AG04449 (cell line): ENCODE measurements at regions of chr17 and their contacts with region 1.

Region 1: GRCh38 chr17:18248300-18248731 is 10.2 kb downstream of the FLII start:
- DNase-seq: no peak
- H3K4me3 ChIP-seq: no peak overlapping the region
- CTCF ChIP-seq: peak; percentile 83

Region 2: GRCh38 chr17:17959520-17960361 is 288.6 kb before region 1 on chr17:
- CTCF ChIA-PET with region 1: no interaction called
- POLR2A ChIA-PET with region 1: no interaction called
- DNase-seq: no peak
- H3K4me3 ChIP-seq: peak overlapping the region; percentile 45
- CTCF ChIP-seq: no peak

Region 3: DNA sequence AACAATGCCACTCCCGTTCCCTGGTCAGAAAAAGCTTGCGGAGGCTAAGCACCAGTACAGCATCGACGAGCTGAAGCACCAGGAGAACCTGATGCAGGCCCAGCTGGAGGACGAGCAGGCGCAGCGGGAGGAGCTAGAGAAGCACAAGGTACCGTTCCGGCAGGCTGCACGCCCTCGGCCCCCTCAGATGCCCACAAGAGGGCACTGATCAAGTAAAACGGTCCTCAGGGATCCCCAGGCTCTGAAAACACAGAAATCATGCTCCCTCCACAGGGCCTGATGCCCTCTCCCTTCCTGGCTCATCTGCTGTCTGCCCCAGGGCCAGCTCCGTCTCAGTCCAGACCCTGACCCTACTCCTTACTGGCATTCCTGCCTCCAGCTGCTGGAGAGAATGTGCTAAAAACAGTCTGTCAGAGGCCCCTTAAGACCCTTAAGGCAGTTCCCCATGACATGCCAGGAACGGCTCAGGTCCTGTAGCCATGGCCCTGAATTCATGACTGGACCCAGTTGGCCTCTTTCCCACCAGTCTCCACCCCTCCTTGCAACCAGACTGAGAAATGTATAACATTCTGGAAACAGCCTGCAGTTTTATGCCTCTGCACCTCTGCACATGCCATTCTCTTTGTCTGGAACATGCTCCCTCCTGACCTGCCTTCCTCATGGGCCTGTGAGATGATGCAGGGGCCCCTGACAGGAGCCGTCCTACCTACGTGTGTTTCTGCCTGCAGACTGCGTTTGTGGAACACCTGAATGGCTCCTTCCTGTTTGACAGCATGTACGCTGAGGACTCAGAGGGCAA is 253.8 kb before region 1 on chr17:
- CTCF ChIA-PET with region 1: no interaction called
- POLR2A ChIA-PET with region 1: no interaction called
- DNase-seq: no peak
- H3K4me3 ChIP-seq: no peak overlapping the region
- CTCF ChIP-seq: peak; percentile 50

Region 4: DNA sequence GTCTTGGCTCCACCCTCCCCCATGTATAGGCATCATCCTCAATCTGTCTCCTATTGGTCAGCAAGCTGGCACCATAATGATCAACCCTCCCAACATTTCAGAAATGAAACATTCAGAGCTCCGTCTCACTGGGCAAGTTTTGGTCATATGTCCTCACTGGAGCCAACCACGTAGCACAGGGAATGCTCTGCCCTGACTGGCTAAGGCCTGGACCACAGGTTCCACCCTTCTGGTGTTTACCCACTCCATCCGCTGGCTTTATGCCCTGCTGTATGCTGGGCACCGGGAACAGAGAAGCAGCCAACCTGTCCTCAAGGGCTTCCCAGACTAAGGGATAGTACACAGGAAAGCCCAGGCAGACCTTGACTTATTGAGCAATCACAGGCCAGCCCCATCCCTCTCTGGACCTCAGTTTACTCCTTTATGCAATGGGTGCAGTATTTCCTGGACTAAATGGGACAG is 119.2 kb before region 1 on chr17:
- CTCF ChIA-PET with region 1: no interaction called
- POLR2A ChIA-PET with region 1: no interaction called
- DNase-seq: peak; percentile 4
- H3K4me3 ChIP-seq: no peak overlapping the region
- CTCF ChIP-seq: no peak

Region 5: GRCh38 chr17:18235743-18236256 is 12.5 kb before region 1 on chr17:
- CTCF ChIA-PET with region 1: interaction called, 15 read pairs
- POLR2A ChIA-PET with region 1: interaction called, 5 read pairs
- DNase-seq: no peak
- H3K4me3 ChIP-seq: no peak overlapping the region
- CTCF ChIP-seq: no peak

Region 6: DNA sequence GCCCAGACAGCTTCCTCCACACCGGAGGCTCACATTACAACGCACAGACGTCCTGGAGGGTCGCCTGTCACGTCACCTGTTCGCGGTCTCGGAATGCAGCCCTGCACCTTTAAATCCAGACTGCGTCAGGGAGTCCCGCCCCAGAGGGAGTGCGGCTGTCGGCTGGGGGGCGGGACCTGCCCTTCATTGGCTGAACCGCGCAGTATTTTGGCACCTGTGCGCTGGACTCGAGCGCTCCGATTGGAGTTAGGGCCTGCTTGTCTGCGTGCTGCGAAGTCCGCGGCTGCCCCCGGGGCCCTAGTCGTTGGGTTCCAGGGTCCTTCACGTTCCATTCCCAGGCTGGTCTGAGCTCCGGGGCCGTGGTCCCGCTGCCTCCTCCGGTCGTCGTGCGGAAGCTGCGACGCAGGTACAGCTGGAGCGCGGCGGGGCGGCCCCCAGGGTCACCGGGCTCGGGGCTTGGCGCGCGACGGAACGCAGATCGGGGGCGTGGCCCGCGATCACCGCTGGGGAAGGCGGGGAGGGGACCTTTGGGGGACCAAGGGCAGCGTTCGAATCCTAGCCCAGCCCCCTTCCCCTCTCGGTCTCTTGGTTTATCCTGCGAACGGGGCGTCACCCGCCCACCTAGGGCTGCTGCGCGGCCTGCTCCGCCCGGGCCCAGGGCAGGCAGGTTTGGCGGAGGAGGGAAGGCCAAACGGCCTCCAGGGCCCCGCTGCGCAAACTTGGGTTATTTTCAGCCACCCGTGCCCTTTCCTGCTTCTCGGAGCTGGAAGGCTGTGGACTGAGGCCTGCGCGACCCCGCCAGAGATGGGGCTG is 12.2 kb after region 1 on chr17 and contains the start of gene MIEF2:
- CTCF ChIA-PET with region 1: interaction called, 25 read pairs
- POLR2A ChIA-PET with region 1: interaction called, 5 read pairs
- DNase-seq: peak; percentile 45
- H3K4me3 ChIP-seq: peak within 1 kb of the TSS; percentile 93
- CTCF ChIP-seq: no peak